HepG2 (cell line): ENCODE measurements at regions of chr22 and their contacts with region 1.

Region 1: GRCh38 chr22:41576877-41577276 is 12.8 kb downstream of the PMM1 start:
- DNase-seq: peak; percentile 82
- ATAC-seq: peak; percentile 91
- H3K4me3 ChIP-seq: no peak overlapping the region
- H3K27ac ChIP-seq: no peak overlapping the region
- H3K4me1 ChIP-seq: peaks cover 28% of the 10 kb centered on the region
- H3K27me3 ChIP-seq: no peaks in the 10 kb centered on the region
- CTCF ChIP-seq: peak; percentile 95
- EP300 ChIP-seq: no peak
- POLR2A ChIP-seq: 0 out of 4 replicates have a peak, but pooled peaks of 1 of the 2 experiments have one; percentile 17
- RAD21 ChIP-seq: peak; percentile 98

Region 2: DNA sequence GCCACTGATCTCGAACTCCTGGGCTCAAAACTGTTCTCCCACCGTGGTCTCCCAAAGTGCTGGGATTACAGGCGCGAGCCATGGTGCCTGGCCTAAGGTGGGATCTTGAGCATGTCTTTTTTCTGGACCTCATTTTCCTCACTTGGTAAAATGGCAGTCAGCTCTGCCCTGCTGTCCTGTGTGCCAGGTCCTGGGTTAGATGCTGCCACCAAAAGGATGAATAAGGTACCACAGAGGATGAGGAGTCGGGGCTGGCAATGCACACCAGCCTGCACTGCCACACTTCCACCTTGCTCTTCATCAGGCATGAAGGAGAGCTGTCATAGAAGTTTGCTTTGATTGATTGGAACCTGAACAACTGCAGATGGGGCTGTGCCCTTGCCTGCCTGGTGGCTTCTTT is 75.7 kb before region 1 on chr22:
- CTCF ChIA-PET with region 1: no interaction called
- POLR2A ChIA-PET with region 1: no interaction called
- in situ Hi-C with region 1: no loop called
- intact Hi-C with region 1: no loop called
- DNase-seq: peak; percentile 23
- ATAC-seq: peak; percentile 79
- H3K4me3 ChIP-seq: no peak overlapping the region
- H3K27ac ChIP-seq: no peak overlapping the region
- H3K4me1 ChIP-seq: no peaks in the 10 kb centered on the region
- H3K27me3 ChIP-seq: no peaks in the 10 kb centered on the region
- CTCF ChIP-seq: peak; percentile 53
- EP300 ChIP-seq: no peak
- POLR2A ChIP-seq: no peak
- RAD21 ChIP-seq: 0 out of 2 replicates have a peak, but pooled peaks have one; percentile 38

Region 3: DNA sequence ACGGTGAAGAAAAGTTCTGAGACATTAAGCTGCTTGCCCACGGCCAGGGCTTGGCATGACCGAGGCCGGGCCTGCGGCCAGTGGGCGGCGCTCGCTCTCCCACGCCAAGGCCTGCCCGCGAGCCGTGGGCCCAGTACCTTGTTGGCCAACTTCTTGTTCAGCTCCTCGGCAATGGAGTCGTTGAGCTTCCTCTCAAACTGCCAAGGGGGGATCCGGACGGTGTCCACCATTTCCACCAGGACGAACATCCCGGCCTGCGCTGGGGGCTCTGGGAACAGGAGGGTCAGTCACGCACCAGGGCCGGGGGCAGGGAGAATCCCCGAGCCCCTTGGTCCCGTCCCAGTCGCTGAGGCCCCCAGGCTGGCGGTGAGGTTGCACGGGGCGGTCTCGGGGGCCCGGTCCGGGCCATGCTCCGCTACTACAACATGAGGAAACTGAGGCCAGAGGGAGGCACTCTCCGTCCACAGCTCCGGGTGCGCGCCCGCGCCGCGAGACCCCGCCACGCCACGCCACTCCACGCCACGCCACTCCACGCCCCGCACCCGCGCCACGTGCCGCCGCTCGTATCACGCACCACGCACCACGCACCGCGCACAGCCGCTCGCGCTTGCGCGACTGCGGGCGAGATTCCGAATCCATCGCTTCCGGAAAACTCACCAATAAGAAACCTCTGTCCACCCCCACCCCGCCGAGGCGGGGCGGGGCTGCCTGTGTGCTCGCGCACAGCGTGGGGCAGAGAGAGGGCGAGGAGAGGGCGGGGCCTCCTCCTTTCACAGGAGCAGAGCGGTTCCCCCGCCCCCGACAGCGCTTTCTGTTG is 32.8 kb before region 1 on chr22 and contains the start of gene POLR3H:
- CTCF ChIA-PET with region 1: interaction called, 21 read pairs
- POLR2A ChIA-PET with region 1: no interaction called
- in situ Hi-C with region 1: no loop called
- intact Hi-C with region 1: no loop called
- DNase-seq: peak; percentile 95
- ATAC-seq: peak; percentile 83
- H3K4me3 ChIP-seq: peak within 1 kb of the TSS; percentile 74 to 89 (median 85)
- H3K27ac ChIP-seq: peak within 1 kb of the TSS; percentile 72
- H3K4me1 ChIP-seq: peaks cover 78% of the 10 kb centered on the region
- H3K27me3 ChIP-seq: no peaks in the 10 kb centered on the region
- CTCF ChIP-seq: peak; percentile 93
- EP300 ChIP-seq: peak in 1 of 2 experiments; percentile 48; a peak in 1 of 4 replicates
- POLR2A ChIP-seq: peak in 1 of 2 experiments; percentile 58; a peak in 1 of 4 replicates
- RAD21 ChIP-seq: peak; percentile 46; the same call in 1 of the 2 replicates
- total RNA-seq, gene POLR3H: 28.6 and 30.3 TPM in 2 replicates

Region 4: GRCh38 chr22:41557401-41558240 is 19.3 kb before region 1 on chr22:
- CTCF ChIA-PET with region 1: interaction called, 14 read pairs
- POLR2A ChIA-PET with region 1: interaction called, 12 read pairs
- in situ Hi-C with region 1: no loop called
- intact Hi-C with region 1: no loop called
- DNase-seq: peak; percentile 70
- ATAC-seq: peak; percentile 46
- H3K4me3 ChIP-seq: peak overlapping the region; percentile 27 to 72 (median 56); a peak in 5 of 6 replicates
- H3K27ac ChIP-seq: peak overlapping the region; percentile 8
- H3K4me1 ChIP-seq: peaks cover 89% of the 10 kb centered on the region
- H3K27me3 ChIP-seq: peaks cover 0 to 25% of the 10 kb centered on the region in 2 experiments; a peak in 4 of 5 replicates
- CTCF ChIP-seq: 0 out of 2 replicates have a peak, but pooled peaks have one; percentile 10
- EP300 ChIP-seq: 0 out of 4 replicates have a peak, but pooled peaks of 1 of the 2 experiments have one; percentile 26
- POLR2A ChIP-seq: 0 out of 4 replicates have a peak, but pooled peaks of 1 of the 2 experiments have one; percentile 25
- RAD21 ChIP-seq: no peak

Region 5: GRCh38 chr22:41596776-41597634 is 20.1 kb after region 1 on chr22:
- CTCF ChIA-PET with region 1: interaction called, 77 read pairs
- POLR2A ChIA-PET with region 1: no interaction called
- in situ Hi-C with region 1: no loop called
- intact Hi-C with region 1: loop called (anchors 2 kb)
- DNase-seq: peak; percentile 39
- ATAC-seq: peak; percentile 91
- H3K4me3 ChIP-seq: no peak overlapping the region
- H3K27ac ChIP-seq: no peak overlapping the region
- H3K4me1 ChIP-seq: peaks cover 27% of the 10 kb centered on the region
- H3K27me3 ChIP-seq: no peaks in the 10 kb centered on the region
- CTCF ChIP-seq: peak; percentile 99
- EP300 ChIP-seq: no peak
- POLR2A ChIP-seq: 0 out of 4 replicates have a peak, but pooled peaks of 1 of the 2 experiments have one; percentile 34
- RAD21 ChIP-seq: peak; percentile 96